A673 (cell line): ENCODE measurements at regions of chr16 and their contacts with region 1.

Region 1: DNA sequence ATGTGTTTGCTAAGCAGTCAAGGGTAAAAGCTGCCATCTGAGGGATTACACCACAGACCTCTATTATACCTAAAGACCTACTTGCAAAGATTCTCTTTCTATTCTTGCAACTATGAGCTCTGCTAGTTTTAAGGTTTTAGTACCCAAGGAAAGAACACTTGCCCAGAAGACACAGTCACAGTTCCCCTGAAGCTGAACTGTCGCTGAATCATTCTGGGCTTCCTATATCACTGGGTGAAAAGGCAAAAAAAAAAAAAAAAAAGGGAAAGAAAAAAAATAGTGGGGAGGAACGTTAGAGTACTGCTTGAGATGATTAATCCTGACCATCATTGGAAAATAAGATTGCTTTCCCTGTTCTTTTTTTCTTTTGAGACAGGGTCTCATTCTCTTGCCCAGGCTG is 37.9 kb downstream of the LYRM1 start:
- DNase-seq: no peak
- H3K4me3 ChIP-seq: no peak overlapping the region
- H3K27ac ChIP-seq: no peak overlapping the region
- H3K4me1 ChIP-seq: no peaks in the 10 kb centered on the region
- H3K27me3 ChIP-seq: no peaks in the 10 kb centered on the region
- CTCF ChIP-seq: no peak

Region 2: DNA sequence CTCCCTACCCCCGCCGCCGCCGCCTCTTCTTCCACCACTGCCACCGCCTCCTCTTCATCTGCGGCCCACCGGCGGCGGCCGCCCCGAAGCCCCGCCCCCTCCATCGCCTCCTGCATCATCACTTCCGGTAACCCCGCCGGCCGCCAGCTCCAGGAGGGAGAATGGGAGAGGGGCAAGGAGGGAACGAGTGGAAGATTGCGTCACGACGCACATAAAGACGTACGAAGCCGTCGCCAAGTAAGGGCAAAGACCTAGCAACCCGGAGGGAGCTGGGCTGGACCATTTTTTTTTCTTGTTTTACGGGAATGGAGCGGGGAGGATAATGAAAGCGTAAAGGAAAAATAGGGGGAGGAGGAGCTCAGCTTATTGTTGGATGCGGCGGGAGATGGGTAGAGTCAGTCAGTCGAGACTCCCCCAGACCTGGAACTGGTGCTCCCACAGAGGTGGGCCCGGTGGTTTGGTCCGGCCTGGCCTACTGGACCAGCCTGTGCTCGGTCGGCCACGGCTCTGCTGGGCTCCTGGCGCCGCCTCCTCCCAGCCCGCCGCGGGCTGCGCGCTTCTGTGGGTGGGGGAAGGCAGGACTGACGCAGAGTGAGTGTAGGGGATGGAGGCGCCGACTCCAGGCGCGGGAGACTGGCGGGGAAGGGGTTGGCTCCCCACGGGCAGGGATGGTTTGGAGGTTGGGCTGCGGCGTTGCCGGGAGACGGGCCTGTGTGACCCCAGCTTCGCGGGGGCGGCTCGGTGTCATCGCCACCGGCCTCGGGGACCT is 37.9 kb before region 1 on chr16 and contains the starts of genes DCUN1D3 and LYRM1:
- CTCF ChIA-PET with region 1: no interaction called
- POLR2A ChIA-PET with region 1: interaction called, 28 read pairs
- intact Hi-C with region 1: no loop called
- DNase-seq: peak; percentile 98
- H3K4me3 ChIP-seq: peak within 1 kb of the TSS; percentile 75
- H3K27ac ChIP-seq: peak within 1 kb of the TSS; percentile 96
- H3K4me1 ChIP-seq: peaks cover 20% of the 10 kb centered on the region
- H3K27me3 ChIP-seq: no peaks in the 10 kb centered on the region
- CTCF ChIP-seq: no peak
- total RNA-seq, gene DCUN1D3: 12.4 and 12.7 TPM in 2 replicates
- total RNA-seq, gene LYRM1: 14.3 and 21.4 TPM in 2 replicates

Region 3: DNA sequence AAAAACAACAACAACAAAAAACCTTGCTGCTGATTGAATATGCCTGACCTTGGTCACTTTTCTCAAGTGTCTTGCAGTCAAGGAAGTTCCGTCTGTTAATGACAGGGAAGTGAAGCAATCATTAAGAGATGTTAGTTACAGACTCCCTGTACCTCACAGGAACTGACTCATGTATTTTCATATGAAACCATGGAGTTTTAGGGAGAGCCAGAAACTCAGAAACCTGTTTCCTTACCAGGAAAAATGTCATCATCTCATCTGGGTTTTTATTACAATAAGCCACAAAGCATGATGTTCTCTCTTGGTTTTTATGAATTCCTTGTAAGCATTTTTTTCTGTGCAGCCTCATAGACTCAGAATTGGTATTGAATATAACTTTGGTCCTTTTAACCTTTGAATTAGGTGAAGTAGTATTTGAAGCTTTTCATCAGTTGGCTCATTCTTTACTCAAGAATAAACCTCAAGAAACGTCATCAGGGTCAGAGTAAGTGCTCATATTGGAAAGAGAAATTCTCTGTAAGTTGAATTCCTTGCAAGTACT is 27.6 kb before region 1 on chr16:
- CTCF ChIA-PET with region 1: no interaction called
- POLR2A ChIA-PET with region 1: no interaction called
- intact Hi-C with region 1: no loop called
- DNase-seq: peak; percentile 48
- H3K4me3 ChIP-seq: no peak overlapping the region
- H3K27ac ChIP-seq: no peak overlapping the region
- H3K4me1 ChIP-seq: peaks cover 7% of the 10 kb centered on the region
- H3K27me3 ChIP-seq: no peaks in the 10 kb centered on the region
- CTCF ChIP-seq: no peak

Region 4: DNA sequence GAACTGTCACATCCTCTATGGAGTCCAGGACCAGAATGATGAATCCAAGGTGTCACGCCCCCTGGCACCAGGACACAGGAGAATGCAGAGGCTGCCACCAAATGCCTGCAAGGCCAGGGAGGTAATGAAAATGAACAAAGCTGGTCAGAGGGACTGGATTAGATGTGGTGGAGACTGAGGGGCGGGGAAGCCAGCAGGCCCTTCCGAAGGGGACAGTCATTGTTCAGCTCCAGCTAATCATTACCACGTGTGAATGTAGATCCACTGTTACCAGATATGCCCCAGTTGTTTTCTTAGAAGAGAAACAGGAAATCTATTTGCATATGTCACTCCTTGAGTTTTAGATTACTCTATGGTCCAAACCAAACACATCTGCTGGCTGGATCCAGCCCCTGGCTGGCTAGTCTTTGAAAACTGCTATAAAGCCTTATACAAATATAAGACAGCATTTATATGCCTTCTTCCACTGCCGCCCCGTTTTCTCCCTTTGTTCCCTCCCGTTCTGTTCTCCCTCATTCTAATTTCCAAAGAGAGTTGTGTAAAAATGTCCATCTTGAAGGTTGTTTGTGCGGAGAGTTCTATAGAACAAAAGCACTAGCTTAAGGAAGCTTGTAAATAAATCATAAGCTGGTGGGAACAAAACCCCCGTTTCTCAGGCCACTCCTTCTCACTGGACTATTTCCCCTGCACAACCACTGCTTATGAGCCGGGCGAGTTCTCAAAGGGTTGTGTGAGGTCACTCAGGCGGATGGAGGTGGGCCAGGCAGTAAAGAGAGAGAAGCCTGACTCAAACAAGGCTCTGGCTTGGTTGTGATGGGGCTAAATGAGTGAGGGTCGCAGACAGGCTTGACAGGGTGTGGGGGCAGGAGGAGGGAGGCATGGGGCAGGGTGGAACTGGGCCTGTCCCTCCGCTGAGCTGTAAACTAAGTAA is 325.5 kb after region 1 on chr16:
- CTCF ChIA-PET with region 1: no interaction called
- POLR2A ChIA-PET with region 1: interaction called, 20 read pairs
- intact Hi-C with region 1: no loop called
- DNase-seq: peak; percentile 79
- H3K4me3 ChIP-seq: no peak overlapping the region
- H3K27ac ChIP-seq: no peak overlapping the region
- H3K4me1 ChIP-seq: peaks cover 10% of the 10 kb centered on the region
- H3K27me3 ChIP-seq: no peaks in the 10 kb centered on the region
- CTCF ChIP-seq: no peak